Aorta (tissue), 5 donors: ENCODE measurements at regions of chr3 and their contacts with region 1.

Region 1: DNA sequence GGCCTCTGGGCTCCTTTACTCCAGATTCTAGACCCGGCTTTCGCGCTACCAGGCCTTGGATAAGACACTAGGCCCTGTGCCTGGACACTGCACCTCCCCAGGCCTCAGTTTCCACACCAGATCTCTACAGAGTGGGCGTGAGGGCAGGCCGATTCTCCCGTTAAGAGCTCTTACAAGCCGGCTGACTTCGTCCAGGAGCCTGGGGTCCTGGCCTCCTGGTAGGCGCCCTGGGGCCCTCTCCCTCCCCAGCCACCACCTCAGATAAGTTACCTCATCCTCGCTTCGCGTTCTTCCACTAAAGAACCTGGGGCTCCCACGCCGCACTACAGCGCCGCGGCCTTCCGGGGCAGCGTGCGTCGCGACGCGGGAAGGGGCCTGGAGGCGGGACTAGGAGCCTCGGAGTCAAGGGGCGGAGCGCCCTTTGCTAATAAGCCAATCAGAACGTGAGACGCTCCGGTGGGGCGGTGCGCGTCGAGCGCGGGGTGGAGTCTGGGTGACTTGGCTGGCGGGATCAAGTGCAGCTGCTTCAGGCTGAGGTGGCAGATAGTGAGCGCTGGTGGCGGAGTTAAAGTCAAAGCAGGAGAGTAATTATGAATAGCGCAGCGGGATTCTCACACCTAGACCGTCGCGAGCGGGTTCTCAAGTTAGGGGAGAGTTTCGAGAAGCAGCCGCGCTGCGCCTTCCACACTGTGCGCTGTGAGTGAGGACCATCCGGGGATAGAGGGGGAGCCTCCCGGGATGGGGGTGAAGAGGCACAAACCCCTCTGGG is at the starts of genes EAF2 and IQCB1:
- DNase-seq: peak; percentile 98
- ATAC-seq: peak; percentile 100
- H3K4me3 ChIP-seq: peak within 1 kb of the TSS; percentile 64 to 85
- H3K27ac ChIP-seq: peak within 1 kb of the TSS in 1 of 2 donors; percentile 30
- H3K4me1 ChIP-seq: no peaks in the 10 kb centered on the region
- H3K27me3 ChIP-seq: no peaks in the 10 kb centered on the region
- total RNA-seq, gene EAF2: 4.3 to 6.0 TPM
- total RNA-seq, gene IQCB1: 17.5 to 20.4 TPM

Region 2: DNA sequence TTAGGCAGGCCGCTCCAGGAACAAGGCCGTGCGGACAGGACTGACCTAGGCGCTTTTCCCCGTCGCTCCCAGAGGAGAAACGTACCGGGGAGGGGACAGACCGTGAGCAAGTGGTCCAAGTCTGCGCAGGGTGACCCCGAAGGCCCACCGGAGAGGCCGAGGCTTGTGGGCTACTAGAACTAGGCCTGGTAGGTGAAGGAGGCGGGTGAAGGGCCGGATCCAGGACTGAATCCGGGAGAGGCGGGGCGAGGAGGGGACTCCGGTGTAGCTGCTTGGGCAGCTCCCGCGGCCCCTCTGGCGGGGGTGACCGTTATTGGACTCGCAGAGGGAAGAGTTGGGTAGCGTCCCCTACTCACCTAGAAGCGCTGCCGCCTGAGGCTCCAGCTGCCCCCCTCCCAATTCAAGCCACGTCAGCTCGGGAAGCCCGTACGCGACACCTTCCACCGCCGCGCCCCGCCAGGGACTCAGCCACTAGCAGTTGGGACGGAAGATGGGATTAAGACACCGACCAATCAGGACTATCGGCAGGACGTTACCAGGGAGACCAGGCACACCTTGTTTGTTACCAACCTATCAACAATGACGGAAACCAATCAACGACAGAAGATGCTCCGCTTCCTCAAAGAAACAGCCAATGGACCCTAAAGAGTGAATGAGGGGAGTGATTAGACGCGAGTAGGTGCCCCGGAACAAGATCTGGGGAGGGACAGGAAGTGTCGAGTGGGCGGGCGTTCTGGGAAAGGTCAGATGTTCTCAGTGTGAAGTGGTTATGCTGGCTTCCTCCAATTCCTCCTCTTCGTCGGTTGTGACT is 85.4 kb before region 1 on chr3 and contains the start of gene GOLGB1:
- intact Hi-C with region 1: loop called in 1 of 2 experiments (anchors 2 kb)
- DNase-seq: peak; percentile 96 to 97
- ATAC-seq: peak; percentile 99
- H3K4me3 ChIP-seq: peak within 1 kb of the TSS; percentile 75 to 87
- H3K27ac ChIP-seq: peak within 1 kb of the TSS; percentile 12 to 74
- H3K4me1 ChIP-seq: peaks cover 0 to 6% of the 10 kb centered on the region in 2 donors
- H3K27me3 ChIP-seq: no peaks in the 10 kb centered on the region
- total RNA-seq, gene GOLGB1: 73.5 to 74.0 TPM

Region 3: GRCh38 chr3:121768452-121768851 is 66.4 kb before region 1 on chr3:
- intact Hi-C with region 1: no loop called
- DNase-seq: no peak
- ATAC-seq: no peak
- H3K4me3 ChIP-seq: no peak overlapping the region
- H3K27ac ChIP-seq: no peak overlapping the region
- H3K4me1 ChIP-seq: no peaks in the 10 kb centered on the region
- H3K27me3 ChIP-seq: no peaks in the 10 kb centered on the region

Region 4: DNA sequence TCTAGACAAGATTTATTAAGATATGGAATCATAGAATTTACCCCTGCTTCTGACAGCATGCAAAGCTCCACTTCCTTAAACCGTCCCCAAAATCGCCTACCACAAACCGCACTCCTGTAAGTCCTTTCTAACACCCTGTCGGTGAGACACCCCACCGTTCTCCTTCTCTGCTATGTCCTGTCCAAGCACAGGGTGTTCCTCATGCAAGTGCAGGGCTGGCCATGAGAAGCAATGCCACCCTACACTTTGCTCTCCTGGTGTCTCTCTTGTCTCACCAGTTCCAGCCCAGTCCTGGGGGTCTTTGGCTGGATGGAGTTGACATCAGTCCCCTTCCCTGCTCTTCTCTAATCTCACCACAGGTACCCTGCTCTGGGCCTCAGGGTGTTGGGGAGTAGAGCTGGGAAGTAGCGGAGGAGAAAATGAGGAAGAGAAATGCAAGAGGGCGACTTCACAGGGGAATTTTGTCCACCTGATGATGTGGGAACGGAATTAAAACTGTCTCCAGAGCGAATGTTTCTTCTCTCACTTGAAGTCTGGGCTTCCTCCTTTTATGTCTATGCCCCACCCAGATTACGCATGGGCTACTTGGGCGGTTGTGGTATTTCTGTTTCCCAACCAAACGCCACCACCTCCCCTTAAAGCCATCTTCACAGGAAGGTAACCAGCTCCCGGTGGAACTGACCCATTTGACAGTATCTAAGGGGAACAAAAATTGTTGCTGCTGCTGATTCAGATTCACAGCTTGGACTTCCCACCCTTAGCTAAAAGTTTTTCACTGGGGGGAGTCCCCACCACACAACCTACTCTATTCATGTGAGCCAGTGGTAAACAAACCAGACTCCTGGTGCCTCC is 398.4 kb after region 1 on chr3:
- intact Hi-C with region 1: no loop called
- DNase-seq: no peak
- ATAC-seq: no peak
- H3K4me3 ChIP-seq: no peak overlapping the region
- H3K27ac ChIP-seq: no peak overlapping the region
- H3K4me1 ChIP-seq: no peaks in the 10 kb centered on the region
- H3K27me3 ChIP-seq: no peaks in the 10 kb centered on the region